ENCODE measurements at regions of chr6 and their contacts with region 1.

Region 1: GRCh38 chr6:132798869-132799538 is 567 bp upstream of the SLC18B1 start:
- DNase-seq: peak; percentile 35 to 70 (median 64)
- ATAC-seq: peak; percentile 91
- H3K4me3 ChIP-seq: no peak overlapping the region
- H3K4me3 Mint-ChIP-seq: no peak overlapping the region
- H3K27ac ChIP-seq: no peak overlapping the region
- H3K27ac Mint-ChIP-seq: peak overlapping the region in 1 of 9 donors; percentile 87
- H3K4me1 ChIP-seq: no peaks in the 10 kb centered on the region
- H3K4me1 Mint-ChIP-seq: peaks cover 6 to 49% (median 40%) of the 10 kb centered on the region in 7 donors
- H3K27me3 ChIP-seq: no peaks in the 10 kb centered on the region
- H3K27me3 Mint-ChIP-seq: peaks cover 0 to 12% (median 0%) of the 10 kb centered on the region in 5 donors

Region 2: GRCh38 chr6:132768051-132768517 is 30.9 kb before region 1 on chr6:
- CTCF ChIA-PET with region 1: interaction called, 10 read pairs
- POLR2A ChIA-PET with region 1: interaction called, 24 read pairs
- intact Hi-C with region 1: loop called (anchors 1 kb)
- DNase-seq: peak in 6 of 9 donors; percentile 7 to 23 (median 11)
- ATAC-seq: peak; percentile 79
- H3K4me3 ChIP-seq: no peak overlapping the region
- H3K4me3 Mint-ChIP-seq: no peak overlapping the region
- H3K27ac ChIP-seq: no peak overlapping the region
- H3K27ac Mint-ChIP-seq: peak overlapping the region in 2 of 9 donors; percentile 14 to 40
- H3K4me1 ChIP-seq: peaks cover 8 to 9% of the 10 kb centered on the region in 2 donors
- H3K4me1 Mint-ChIP-seq: peaks cover 13 to 20% (median 15%) of the 10 kb centered on the region in 7 donors
- H3K27me3 ChIP-seq: no peaks in the 10 kb centered on the region
- H3K27me3 Mint-ChIP-seq: peaks cover 0 to 2% (median 0%) of the 10 kb centered on the region in 5 donors

Region 3: DNA sequence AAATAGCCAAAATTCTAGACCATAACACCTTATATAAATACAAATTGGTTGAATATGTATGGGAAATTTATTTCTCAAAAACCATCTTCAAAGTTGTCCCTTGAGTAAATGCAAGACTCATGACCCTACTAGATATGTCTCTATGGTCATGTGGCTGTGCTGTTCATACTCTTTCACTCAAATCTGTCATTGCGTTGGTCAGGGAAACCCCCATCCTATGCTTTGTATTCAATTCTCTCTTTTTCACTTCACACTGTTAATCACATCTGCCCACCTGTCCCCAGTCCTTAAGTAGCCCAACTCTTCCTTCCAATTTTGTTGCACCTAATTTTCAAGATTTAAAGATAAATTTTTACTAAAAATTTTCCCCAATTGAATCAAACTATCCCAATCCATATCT is 66.4 kb after region 1 on chr6:
- CTCF ChIA-PET with region 1: no interaction called
- POLR2A ChIA-PET with region 1: no interaction called
- intact Hi-C with region 1: no loop called
- DNase-seq: no peak
- ATAC-seq: no peak
- H3K4me3 ChIP-seq: no peak overlapping the region
- H3K4me3 Mint-ChIP-seq: no peak overlapping the region
- H3K27ac ChIP-seq: no peak overlapping the region
- H3K27ac Mint-ChIP-seq: no peak overlapping the region
- H3K4me1 ChIP-seq: no peaks in the 10 kb centered on the region
- H3K4me1 Mint-ChIP-seq: no peaks in the 10 kb centered on the region
- H3K27me3 ChIP-seq: no peaks in the 10 kb centered on the region
- H3K27me3 Mint-ChIP-seq: peaks cover 6 to 14% (median 10%) of the 10 kb centered on the region in 5 donors

Region 4: GRCh38 chr6:132948889-132949288 is 149.9 kb after region 1 on chr6:
- CTCF ChIA-PET with region 1: no interaction called
- POLR2A ChIA-PET with region 1: no interaction called
- intact Hi-C with region 1: no loop called
- DNase-seq: no peak
- ATAC-seq: no peak
- H3K4me3 ChIP-seq: no peak overlapping the region
- H3K4me3 Mint-ChIP-seq: no peak overlapping the region
- H3K27ac ChIP-seq: no peak overlapping the region
- H3K27ac Mint-ChIP-seq: no peak overlapping the region
- H3K4me1 ChIP-seq: no peaks in the 10 kb centered on the region
- H3K4me1 Mint-ChIP-seq: no peaks in the 10 kb centered on the region
- H3K27me3 ChIP-seq: no peaks in the 10 kb centered on the region
- H3K27me3 Mint-ChIP-seq: peaks cover 19 to 66% (median 32%) of the 10 kb centered on the region in 5 donors

Region 5: GRCh38 chr6:133326584-133326983 is 527.6 kb after region 1 on chr6:
- CTCF ChIA-PET with region 1: no interaction called
- POLR2A ChIA-PET with region 1: no interaction called
- intact Hi-C with region 1: no loop called
- DNase-seq: no peak
- ATAC-seq: no peak
- H3K4me3 ChIP-seq: no peak overlapping the region
- H3K4me3 Mint-ChIP-seq: no peak overlapping the region
- H3K27ac ChIP-seq: no peak overlapping the region
- H3K27ac Mint-ChIP-seq: no peak overlapping the region
- H3K4me1 ChIP-seq: no peaks in the 10 kb centered on the region
- H3K4me1 Mint-ChIP-seq: no peaks in the 10 kb centered on the region
- H3K27me3 ChIP-seq: no peaks in the 10 kb centered on the region
- H3K27me3 Mint-ChIP-seq: peaks cover 0 to 6% (median 4%) of the 10 kb centered on the region in 5 donors

Measured in naive thymus-derived CD4-positive, alpha-beta T cell (primary cell).